Activated T-helper 2 cell treated with anti-CD3 and anti-CD28 coated beads, Interferon-gamma antibody, Interleukin-2, Interleukin-4, amounts not matched to agents 10 μg/mL and 5 μg/mL and 100 μg/mL, durations not matched to agents 14 hours and 24 hours and 36 hours (primary cell): ENCODE measurements at regions of chr2 and their contacts with region 1.

Region 1: GRCh38 chr2:100818606-100819369 is 1.2 kb upstream of the NPAS2 start:
- DNase-seq: no peak
- H3K4me3 Mint-ChIP-seq: peak overlapping the region; percentile 77
- H3K27ac Mint-ChIP-seq: peak overlapping the region; percentile 50
- H3K4me1 Mint-ChIP-seq: peaks cover 19% of the 10 kb centered on the region
- H3K27me3 Mint-ChIP-seq: peaks cover 46% of the 10 kb centered on the region

Region 2: GRCh38 chr2:100630473-100630977 is 188.3 kb before region 1 on chr2:
- intact Hi-C with region 1: loop called (anchors 10 kb)
- DNase-seq: peak; percentile 53
- H3K4me3 Mint-ChIP-seq: peak overlapping the region; percentile 27
- H3K27ac Mint-ChIP-seq: peak overlapping the region; percentile 46
- H3K4me1 Mint-ChIP-seq: peaks cover 27% of the 10 kb centered on the region
- H3K27me3 Mint-ChIP-seq: peaks cover 9% of the 10 kb centered on the region